Cardiac septum (tissue), 1 donor: ENCODE measurements at regions of chr2 and their contacts with region 1.

Region 1: DNA sequence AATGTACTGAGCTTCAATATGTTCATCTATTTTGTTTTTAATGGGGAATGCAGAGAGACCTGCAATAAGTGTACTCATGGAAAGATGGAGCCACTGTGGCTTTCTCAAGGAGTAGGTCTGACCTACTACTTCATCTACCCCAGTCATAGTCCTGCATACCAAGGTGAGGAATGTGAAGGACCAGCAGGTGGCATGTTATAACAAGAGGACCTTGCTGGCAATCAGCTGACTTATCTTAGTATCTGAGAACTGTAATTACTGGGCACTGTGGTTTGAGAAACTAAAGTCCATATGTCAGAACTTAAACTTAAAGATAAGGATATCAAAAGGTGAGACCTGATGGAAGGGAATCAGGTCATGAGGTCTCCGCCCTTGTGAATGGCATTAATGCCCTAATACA is 1104.2 kb downstream of the BCL11A start:
- DNase-seq: no peak

Region 2: DNA sequence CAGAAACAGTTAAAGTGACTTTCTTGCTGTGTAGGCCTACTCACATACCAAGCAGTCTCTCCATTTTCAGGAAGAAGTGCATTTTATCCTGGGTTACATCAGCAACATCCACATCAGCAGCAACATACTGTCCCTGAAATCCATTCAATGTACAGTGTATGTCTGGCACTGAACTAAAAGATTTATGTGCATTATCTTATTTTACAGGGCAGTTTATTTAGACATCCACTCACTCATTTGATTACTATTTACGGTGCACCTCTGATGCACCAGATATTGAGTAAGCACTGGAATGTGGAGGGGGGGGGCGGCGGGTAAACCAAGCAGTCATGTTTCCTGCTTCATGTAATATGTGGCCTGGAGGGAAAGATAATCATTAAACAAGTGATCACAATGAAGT is 24.0 kb before region 1 on chr2:
- intact Hi-C with region 1: loop called (anchors 2 kb)
- DNase-seq: no peak

Region 3: GRCh38 chr2:59462422-59463197 is 13.3 kb after region 1 on chr2:
- intact Hi-C with region 1: no loop called
- DNase-seq: no peak